Naive thymus-derived CD4-positive, alpha-beta T cell (primary cell): ENCODE measurements at regions of chr2 and their contacts with region 1.

Region 1: DNA sequence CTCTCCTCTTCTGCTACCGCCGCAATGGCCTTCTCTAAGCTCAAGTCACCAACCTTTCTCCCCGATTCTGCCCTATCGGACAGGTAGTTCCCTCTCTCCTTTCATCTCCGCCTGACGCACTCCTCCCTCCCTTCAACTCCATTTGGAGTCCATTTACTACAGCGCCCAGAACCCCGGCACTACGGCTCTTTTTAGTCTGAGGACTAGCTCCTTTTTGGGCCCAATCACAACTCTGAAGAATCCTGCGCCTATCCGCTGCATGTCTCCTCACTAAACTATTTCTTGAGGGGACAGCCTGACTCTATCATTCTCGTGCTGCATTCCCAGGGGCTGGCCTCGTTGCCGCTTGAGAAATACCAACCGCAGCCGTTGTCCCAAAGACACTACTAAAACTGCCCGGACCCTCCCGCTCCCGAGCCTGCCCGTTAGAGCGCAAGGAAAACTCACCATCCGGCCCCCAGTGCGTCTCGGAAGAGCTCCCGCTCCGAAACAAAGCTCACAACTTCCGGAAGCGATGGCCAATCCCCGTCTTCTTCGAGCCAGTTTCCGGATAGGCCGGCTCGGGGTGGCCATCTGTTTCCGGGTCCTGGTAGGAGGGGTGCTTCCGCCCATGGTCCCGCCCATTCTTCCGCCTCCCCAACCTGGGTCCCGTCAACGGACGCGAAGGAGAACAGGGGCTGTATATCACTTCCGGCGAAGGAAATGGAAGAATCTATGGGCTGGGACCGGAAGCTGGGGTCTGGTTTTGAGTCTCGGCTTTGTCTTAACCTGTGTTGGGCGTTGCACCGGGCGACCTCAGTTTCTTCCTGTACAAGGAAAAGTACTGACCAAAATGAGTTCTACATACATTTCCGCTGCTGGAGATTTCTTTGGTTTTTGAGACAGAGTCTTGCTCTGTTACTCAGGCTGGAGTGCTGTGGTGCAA is at the start of gene TPRKB:
- DNase-seq: peak; percentile 73 to 95 (median 94)
- ATAC-seq: peak; percentile 99
- H3K4me3 ChIP-seq: peak within 1 kb of the TSS; percentile 78
- H3K4me3 Mint-ChIP-seq: peak within 1 kb of the TSS; percentile 92 to 98 (median 98)
- H3K27ac ChIP-seq: peak within 1 kb of the TSS; percentile 67
- H3K27ac Mint-ChIP-seq: peak within 1 kb of the TSS; percentile 85 to 97 (median 91)
- H3K4me1 ChIP-seq: peaks cover 8 to 14% of the 10 kb centered on the region in 2 donors
- H3K4me1 Mint-ChIP-seq: peaks cover 10 to 31% (median 21%) of the 10 kb centered on the region in 7 donors
- H3K27me3 ChIP-seq: no peaks in the 10 kb centered on the region
- H3K27me3 Mint-ChIP-seq: peaks cover 0 to 2% (median 0%) of the 10 kb centered on the region in 5 donors
- total RNA-seq, gene TPRKB: 16.5 to 34.6 (median 27.5) TPM

Region 2: DNA sequence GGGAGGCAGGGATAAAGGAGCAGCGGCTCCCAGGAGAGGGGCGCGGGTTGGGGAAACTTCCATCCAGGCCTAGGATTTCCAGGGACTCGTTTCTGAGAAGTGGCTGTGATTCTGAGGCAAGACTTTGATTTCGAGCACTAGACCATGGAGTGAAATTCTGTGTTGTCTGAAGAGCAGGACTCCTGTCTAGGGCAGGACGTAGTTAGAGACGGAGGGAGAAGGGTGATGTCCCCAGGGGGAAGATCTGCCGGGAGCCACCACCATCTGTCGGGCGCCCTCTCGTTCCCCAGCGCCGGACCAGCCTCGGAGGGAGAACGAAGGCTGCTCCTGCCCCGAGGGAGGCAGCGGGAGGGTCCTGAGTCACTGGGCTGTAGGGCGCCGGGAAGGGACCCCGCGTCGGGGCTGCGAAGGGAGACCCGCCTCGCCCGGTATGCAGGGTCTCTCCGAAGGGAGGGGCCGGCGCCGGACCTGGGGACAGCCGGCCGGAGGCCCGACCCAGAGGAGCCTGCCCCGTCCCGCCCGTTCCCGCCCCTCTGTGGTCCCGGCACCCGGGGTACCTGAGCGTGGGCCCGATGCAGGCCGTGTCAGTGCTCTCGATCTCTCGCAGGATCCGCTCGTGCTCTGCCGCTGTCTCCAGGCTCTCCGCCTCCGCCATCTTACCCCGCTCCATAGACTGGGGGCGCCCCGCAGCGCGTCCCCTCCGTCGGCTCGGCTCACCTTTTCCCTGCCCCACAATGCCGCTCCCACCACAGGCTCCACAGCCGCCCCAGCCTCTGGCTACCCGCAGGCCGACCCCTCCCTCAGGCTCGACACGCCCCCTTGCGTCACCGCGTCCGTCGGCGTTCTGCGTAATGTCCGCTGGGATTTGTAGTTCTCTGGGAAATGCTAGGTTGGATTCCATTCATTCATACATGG is 911.6 kb before region 1 on chr2 and contains the start of gene EXOC6B:
- CTCF ChIA-PET with region 1: no interaction called
- POLR2A ChIA-PET with region 1: no interaction called
- intact Hi-C with region 1: loop called in 1 of 2 experiments (anchors 5 kb)
- DNase-seq: peak; percentile 78 to 87 (median 84)
- ATAC-seq: peak; percentile 96
- H3K4me3 ChIP-seq: peak within 1 kb of the TSS; percentile 70
- H3K4me3 Mint-ChIP-seq: peak within 1 kb of the TSS; percentile 88 to 99 (median 98)
- H3K27ac ChIP-seq: peak within 1 kb of the TSS; percentile 69
- H3K27ac Mint-ChIP-seq: peak within 1 kb of the TSS; percentile 70 to 96 (median 92)
- H3K4me1 ChIP-seq: peaks cover 14 to 19% of the 10 kb centered on the region in 2 donors
- H3K4me1 Mint-ChIP-seq: peaks cover 24 to 48% (median 45%) of the 10 kb centered on the region in 7 donors
- H3K27me3 ChIP-seq: no peaks in the 10 kb centered on the region
- H3K27me3 Mint-ChIP-seq: peaks cover 0 to 12% (median 5%) of the 10 kb centered on the region in 5 donors
- total RNA-seq, gene EXOC6B: 14.3 to 21.9 (median 18.0) TPM

Region 3: GRCh38 chr2:73268830-73269685 is 468.1 kb before region 1 on chr2:
- CTCF ChIA-PET with region 1: no interaction called
- POLR2A ChIA-PET with region 1: no interaction called
- intact Hi-C with region 1: loop called in 1 of 2 experiments (anchors 1 kb)
- DNase-seq: peak; percentile 62 to 81 (median 76)
- ATAC-seq: peak; percentile 91
- H3K4me3 ChIP-seq: peak overlapping the region; percentile 35
- H3K4me3 Mint-ChIP-seq: peak overlapping the region in 9 of 10 donors; percentile 32 to 78 (median 64)
- H3K27ac ChIP-seq: peak overlapping the region; percentile 62
- H3K27ac Mint-ChIP-seq: peak overlapping the region in 4 of 9 donors; percentile 29 to 81 (median 56)
- H3K4me1 ChIP-seq: peaks cover 0 to 12% of the 10 kb centered on the region in 2 donors
- H3K4me1 Mint-ChIP-seq: peaks cover 23 to 34% (median 26%) of the 10 kb centered on the region in 7 donors
- H3K27me3 ChIP-seq: no peaks in the 10 kb centered on the region
- H3K27me3 Mint-ChIP-seq: no peaks in the 10 kb centered on the region

Region 4: DNA sequence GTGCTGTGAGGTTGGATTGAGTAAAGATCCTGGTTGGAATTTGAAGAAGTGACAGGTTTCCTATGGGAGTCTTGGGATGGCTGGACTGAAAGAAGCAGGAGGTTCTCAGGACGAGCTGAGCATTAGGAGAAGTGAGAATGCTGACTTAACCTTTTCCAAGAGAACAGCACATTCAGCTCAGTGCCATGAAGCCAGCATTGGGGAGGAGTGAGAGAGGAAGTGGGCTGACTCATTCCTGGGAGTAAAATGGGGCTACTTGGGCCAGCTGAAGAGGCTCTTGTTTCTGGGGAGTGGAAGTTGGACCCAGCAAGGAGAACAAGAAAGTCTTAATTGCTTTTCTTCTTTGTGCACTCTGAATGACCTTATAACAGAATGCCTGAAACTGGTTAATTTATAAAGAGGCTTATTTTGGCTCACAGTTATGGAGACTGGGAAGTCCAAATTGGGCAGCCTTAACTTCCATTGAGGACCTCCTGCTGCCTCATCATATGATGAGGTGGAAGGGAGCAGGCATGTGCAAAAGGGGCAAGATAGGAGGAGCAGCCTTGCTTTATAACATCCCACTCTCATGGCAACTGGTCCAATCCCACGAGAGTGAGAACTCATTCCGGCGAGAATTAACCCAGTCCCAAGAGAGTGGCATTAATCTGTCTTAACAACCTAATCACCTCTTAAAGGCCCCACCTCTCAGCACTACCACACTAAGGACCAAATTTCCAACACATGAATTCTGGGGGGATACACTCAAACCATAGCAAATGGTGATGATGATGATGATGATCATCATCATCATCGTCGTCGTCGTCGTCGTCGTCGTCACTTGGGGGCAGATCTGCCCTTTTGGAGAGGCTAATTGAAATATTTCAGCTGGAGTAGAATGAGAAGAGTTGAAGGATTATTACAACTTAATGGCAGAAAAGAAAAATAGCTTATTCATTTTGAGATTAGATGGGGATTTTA is 215.7 kb after region 1 on chr2:
- CTCF ChIA-PET with region 1: no interaction called
- POLR2A ChIA-PET with region 1: no interaction called
- intact Hi-C with region 1: no loop called
- DNase-seq: no peak
- ATAC-seq: peak; percentile 70
- H3K4me3 ChIP-seq: no peak overlapping the region
- H3K4me3 Mint-ChIP-seq: no peak overlapping the region
- H3K27ac ChIP-seq: no peak overlapping the region
- H3K27ac Mint-ChIP-seq: peak overlapping the region in 8 of 9 donors; percentile 26 to 96 (median 86)
- H3K4me1 ChIP-seq: peaks cover 0 to 38% of the 10 kb centered on the region in 2 donors
- H3K4me1 Mint-ChIP-seq: peaks cover 51 to 80% (median 73%) of the 10 kb centered on the region in 7 donors
- H3K27me3 ChIP-seq: no peaks in the 10 kb centered on the region
- H3K27me3 Mint-ChIP-seq: no peaks in the 10 kb centered on the region

Region 5: DNA sequence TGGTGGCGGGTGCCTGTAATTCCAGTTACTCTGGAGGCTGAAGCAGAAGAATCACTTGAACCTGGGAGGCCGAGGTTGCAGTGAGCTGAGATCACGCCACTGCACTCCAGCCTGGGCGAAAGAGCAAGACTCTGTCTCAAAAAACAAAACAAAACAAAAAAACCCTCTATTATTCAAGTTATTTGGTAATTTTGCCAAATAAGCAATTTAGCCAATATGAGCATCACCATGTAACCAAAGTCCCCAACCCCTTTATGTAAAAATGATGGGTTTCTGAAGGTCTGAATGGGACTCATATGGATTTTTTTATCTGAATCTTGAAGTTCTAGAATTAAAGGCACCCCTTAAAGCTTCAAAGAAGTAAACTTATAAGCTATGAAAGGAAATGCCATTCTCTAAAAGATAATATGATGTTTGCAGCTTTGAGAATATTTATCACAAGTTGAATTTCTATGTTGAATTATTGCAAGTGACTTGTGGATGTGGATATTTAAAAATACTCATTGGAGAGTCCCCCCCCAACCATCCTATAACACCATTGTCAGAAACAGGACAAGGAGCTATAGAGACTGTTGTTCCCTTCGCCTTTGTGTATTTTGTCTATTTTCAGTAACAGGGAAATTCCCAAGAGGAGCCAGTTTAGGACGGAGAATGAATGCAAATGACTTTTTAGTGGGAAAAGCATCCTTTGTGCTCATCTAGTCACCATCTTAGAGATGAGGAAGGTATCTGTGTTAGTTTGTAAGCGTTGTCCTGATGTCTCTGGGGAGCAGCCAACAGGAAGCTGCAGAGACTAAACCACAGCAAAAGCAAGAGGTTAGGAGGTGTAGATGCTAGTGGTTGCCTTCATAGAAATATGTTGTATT is 315.8 kb after region 1 on chr2:
- CTCF ChIA-PET with region 1: no interaction called
- POLR2A ChIA-PET with region 1: no interaction called
- intact Hi-C with region 1: no loop called
- DNase-seq: peak in 7 of 9 donors; percentile 42 to 72 (median 60)
- ATAC-seq: peak; percentile 90
- H3K4me3 ChIP-seq: peak overlapping the region; percentile 31
- H3K4me3 Mint-ChIP-seq: peak overlapping the region; percentile 53 to 76 (median 68)
- H3K27ac ChIP-seq: peak overlapping the region; percentile 17
- H3K27ac Mint-ChIP-seq: peak overlapping the region; percentile 47 to 93 (median 87)
- H3K4me1 ChIP-seq: peaks cover 17 to 20% of the 10 kb centered on the region in 2 donors
- H3K4me1 Mint-ChIP-seq: peaks cover 33 to 85% (median 57%) of the 10 kb centered on the region in 7 donors
- H3K27me3 ChIP-seq: no peaks in the 10 kb centered on the region
- H3K27me3 Mint-ChIP-seq: no peaks in the 10 kb centered on the region

Region 6: GRCh38 chr2:74147727-74148456 is 410.8 kb after region 1 on chr2 and contains the start of gene BOLA3:
- CTCF ChIA-PET with region 1: no interaction called
- POLR2A ChIA-PET with region 1: interaction called, 3 read pairs
- intact Hi-C with region 1: loop called in 1 of 2 experiments (anchors 2 kb)
- DNase-seq: peak; percentile 55 to 93 (median 70)
- ATAC-seq: peak; percentile 95
- H3K4me3 ChIP-seq: peak within 1 kb of the TSS; percentile 72
- H3K4me3 Mint-ChIP-seq: no peak within 1 kb of the TSS
- H3K27ac ChIP-seq: peak within 1 kb of the TSS; percentile 72
- H3K27ac Mint-ChIP-seq: no peak within 1 kb of the TSS
- H3K4me1 ChIP-seq: peaks cover 14 to 15% of the 10 kb centered on the region in 2 donors
- H3K4me1 Mint-ChIP-seq: peaks cover 0 to 15% (median 0%) of the 10 kb centered on the region in 7 donors
- H3K27me3 ChIP-seq: no peaks in the 10 kb centered on the region
- H3K27me3 Mint-ChIP-seq: no peaks in the 10 kb centered on the region
- total RNA-seq, gene BOLA3: 6.9 to 54.8 (median 13.7) TPM

Region 7: GRCh38 chr2:74198461-74199274 is 461.6 kb after region 1 on chr2 and contains the start of gene MTHFD2:
- CTCF ChIA-PET with region 1: no interaction called
- POLR2A ChIA-PET with region 1: no interaction called
- intact Hi-C with region 1: loop called in 1 of 2 experiments (anchors 5 kb)
- DNase-seq: peak; percentile 76 to 93 (median 82)
- ATAC-seq: peak; percentile 94
- H3K4me3 ChIP-seq: peak within 1 kb of the TSS; percentile 65
- H3K4me3 Mint-ChIP-seq: peak within 1 kb of the TSS; percentile 90 to 100 (median 96)
- H3K27ac ChIP-seq: peak within 1 kb of the TSS; percentile 88
- H3K27ac Mint-ChIP-seq: peak within 1 kb of the TSS; percentile 94 to 100 (median 97)
- H3K4me1 ChIP-seq: peaks cover 13 to 16% of the 10 kb centered on the region in 2 donors
- H3K4me1 Mint-ChIP-seq: peaks cover 29 to 50% (median 35%) of the 10 kb centered on the region in 7 donors
- H3K27me3 ChIP-seq: no peaks in the 10 kb centered on the region
- H3K27me3 Mint-ChIP-seq: no peaks in the 10 kb centered on the region
- total RNA-seq, gene MTHFD2: 14.5 to 186 (median 25.1) TPM

Region 8: GRCh38 chr2:74421221-74421870 is 684.2 kb after region 1 on chr2 and contains the starts of genes C2orf81 and WDR54:
- CTCF ChIA-PET with region 1: no interaction called
- POLR2A ChIA-PET with region 1: no interaction called
- intact Hi-C with region 1: loop called (anchors 1 kb)
- DNase-seq: peak; percentile 86 to 96 (median 95)
- ATAC-seq: peak; percentile 97
- H3K4me3 ChIP-seq: peak within 1 kb of the TSS; percentile 96
- H3K4me3 Mint-ChIP-seq: peak within 1 kb of the TSS; percentile 90 to 100 (median 98)
- H3K27ac ChIP-seq: peak within 1 kb of the TSS; percentile 97
- H3K27ac Mint-ChIP-seq: peak within 1 kb of the TSS; percentile 96 to 100 (median 99)
- H3K4me1 ChIP-seq: peaks cover 4 to 19% of the 10 kb centered on the region in 2 donors
- H3K4me1 Mint-ChIP-seq: peaks cover 14 to 44% (median 36%) of the 10 kb centered on the region in 7 donors
- H3K27me3 ChIP-seq: no peaks in the 10 kb centered on the region
- H3K27me3 Mint-ChIP-seq: no peaks in the 10 kb centered on the region
- total RNA-seq, gene C2orf81: 4.3 to 10.5 (median 6.8) TPM
- total RNA-seq, gene WDR54: 26.5 to 78.5 (median 30.8) TPM

Region 9: DNA sequence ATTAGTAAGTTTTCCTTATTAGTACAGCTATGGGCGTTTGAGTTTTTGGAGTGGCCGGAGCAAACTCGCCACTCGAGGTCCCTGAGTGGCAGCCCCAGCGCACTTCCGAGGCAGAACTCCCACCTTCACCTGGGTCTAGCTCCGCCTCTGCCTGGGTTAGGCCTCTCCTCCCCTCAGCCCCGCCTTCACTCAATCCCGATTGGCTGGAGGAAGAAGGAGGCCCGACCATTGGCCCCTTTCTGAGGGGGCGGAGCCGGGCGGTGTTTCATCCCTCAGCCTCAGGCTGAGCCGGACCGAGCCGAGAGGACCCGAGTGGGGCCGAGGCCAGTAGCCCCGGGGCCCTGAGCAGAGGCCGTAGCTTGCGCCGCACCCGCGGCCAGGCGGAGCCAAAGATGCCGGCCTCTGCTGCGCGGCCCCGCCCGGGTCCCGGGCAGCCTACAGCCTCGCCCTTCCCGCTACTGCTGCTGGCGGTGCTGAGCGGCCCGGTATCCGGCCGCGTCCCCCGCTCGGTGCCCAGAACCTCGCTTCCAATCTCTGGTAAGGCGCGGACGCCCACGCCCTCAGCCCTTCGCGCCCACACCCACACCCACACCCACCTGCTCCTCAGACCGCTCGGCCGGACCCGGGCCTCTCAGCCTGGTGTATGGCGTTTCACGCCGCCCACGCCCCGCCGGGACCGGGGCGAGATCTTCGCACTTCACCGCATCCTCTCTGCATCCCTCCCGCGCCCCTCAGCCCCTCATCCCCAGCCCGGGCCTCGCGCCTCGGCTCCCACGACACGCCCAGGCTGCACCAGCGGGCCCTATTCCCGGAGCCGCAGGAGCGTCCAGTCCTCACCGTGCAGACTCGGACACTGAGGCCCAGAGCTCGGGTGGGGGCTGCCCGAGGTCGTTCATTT is 917.1 kb after region 1 on chr2 and contains the start of gene SEMA4F:
- CTCF ChIA-PET with region 1: no interaction called
- POLR2A ChIA-PET with region 1: no interaction called
- intact Hi-C with region 1: loop called (anchors 1 to 5 kb)
- DNase-seq: peak; percentile 85 to 95 (median 92)
- ATAC-seq: peak; percentile 100
- H3K4me3 ChIP-seq: peak within 1 kb of the TSS; percentile 86
- H3K4me3 Mint-ChIP-seq: peak within 1 kb of the TSS; percentile 82 to 97 (median 90)
- H3K27ac ChIP-seq: peak within 1 kb of the TSS; percentile 75
- H3K27ac Mint-ChIP-seq: peak within 1 kb of the TSS in 8 of 9 donors; percentile 59 to 96 (median 85)
- H3K4me1 ChIP-seq: peaks cover 6 to 8% of the 10 kb centered on the region in 2 donors
- H3K4me1 Mint-ChIP-seq: peaks cover 12 to 34% (median 23%) of the 10 kb centered on the region in 7 donors
- H3K27me3 ChIP-seq: no peaks in the 10 kb centered on the region
- H3K27me3 Mint-ChIP-seq: peaks cover 3 to 21% (median 5%) of the 10 kb centered on the region in 5 donors
- total RNA-seq, gene SEMA4F: 5.7 to 23.6 (median 11.0) TPM